ENCODE measurements at regions of chr3 and their contacts with region 1.

Region 1: GRCh38 chr3:14124615-14125190 is at the starts of genes CHCHD4 and TMEM43:
- DNase-seq: peak; percentile 99 to 100
- H3K4me3 ChIP-seq: peak within 1 kb of the TSS; percentile 72 to 83
- H3K27ac ChIP-seq: peak within 1 kb of the TSS; percentile 93 to 94
- H3K4me1 ChIP-seq: peaks cover 0 to 41% (median 31%) of the 10 kb centered on the region in 4 donors
- H3K27me3 ChIP-seq: no peaks in the 10 kb centered on the region
- CTCF ChIP-seq: peak in 1 of 2 experiments; percentile 8

Region 2: GRCh38 chr3:14178247-14179113 is 53.8 kb after region 1 on chr3 and contains the starts of genes LSM3 and XPC:
- intact Hi-C with region 1: loop called (anchors 2 kb)
- DNase-seq: peak; percentile 96 to 98
- H3K4me3 ChIP-seq: peak within 1 kb of the TSS; percentile 93
- H3K27ac ChIP-seq: peak within 1 kb of the TSS; percentile 99
- H3K4me1 ChIP-seq: peaks cover 0 to 40% (median 26%) of the 10 kb centered on the region in 4 donors
- H3K27me3 ChIP-seq: no peaks in the 10 kb centered on the region
- CTCF ChIP-seq: no peak

Region 3: GRCh38 chr3:14452679-14453367 is 328.1 kb after region 1 on chr3:
- intact Hi-C with region 1: loop called (anchors 10 kb)
- DNase-seq: peak; percentile 95 to 97
- H3K4me3 ChIP-seq: no peak overlapping the region
- H3K27ac ChIP-seq: peak overlapping the region; percentile 79 to 82
- H3K4me1 ChIP-seq: peaks cover 10 to 42% (median 29%) of the 10 kb centered on the region in 4 donors
- H3K27me3 ChIP-seq: no peaks in the 10 kb centered on the region
- CTCF ChIP-seq: peak; percentile 31 to 49

Region 4: GRCh38 chr3:14947886-14948555 is 823.3 kb after region 1 on chr3:
- intact Hi-C with region 1: loop called (anchors 10 kb)
- DNase-seq: peak; percentile 96 to 98
- H3K4me3 ChIP-seq: peak overlapping the region; percentile 77 to 94
- H3K27ac ChIP-seq: peak overlapping the region; percentile 93 to 94
- H3K4me1 ChIP-seq: peaks cover 0 to 50% (median 16%) of the 10 kb centered on the region in 4 donors
- H3K27me3 ChIP-seq: no peaks in the 10 kb centered on the region
- CTCF ChIP-seq: no peak